GM12878 (cell line): ENCODE measurements at regions of chr3 and their contacts with region 1.

Region 1: GRCh38 chr3:117526470-117527079 is 817.0 kb downstream of the TUSC7 start:
- DNase-seq: no peak
- ATAC-seq: peak; percentile 64
- H3K4me3 ChIP-seq: no peak overlapping the region
- H3K27ac ChIP-seq: no peak overlapping the region
- H3K4me1 ChIP-seq: no peaks in the 10 kb centered on the region
- H3K27me3 ChIP-seq: no peaks in the 10 kb centered on the region
- CTCF ChIP-seq: peak; percentile 56 to 61 (median 59)
- EP300 ChIP-seq: no peak
- POLR2A ChIP-seq: no peak
- RAD21 ChIP-seq: peak; percentile 84

Region 2: GRCh38 chr3:117019082-117019713 is 507.4 kb before region 1 on chr3:
- CTCF ChIA-PET with region 1: interaction called, 27 read pairs
- POLR2A ChIA-PET with region 1: no interaction called
- RAD21 ChIA-PET with region 1: interaction called, 14 read pairs
- SMC1A ChIA-PET with region 1: interaction called, 19 read pairs
- in situ Hi-C with region 1: loop called (anchors 10 kb)
- intact Hi-C with region 1: loop called (anchors 2 kb)
- DNase-seq: no peak
- ATAC-seq: peak; percentile 94
- H3K4me3 ChIP-seq: no peak overlapping the region
- H3K27ac ChIP-seq: no peak overlapping the region
- H3K4me1 ChIP-seq: peaks cover 7% of the 10 kb centered on the region
- H3K27me3 ChIP-seq: no peaks in the 10 kb centered on the region
- CTCF ChIP-seq: peak; percentile 77 to 81 (median 79)
- EP300 ChIP-seq: no peak
- POLR2A ChIP-seq: no peak
- RAD21 ChIP-seq: peak; percentile 82

Region 3: DNA sequence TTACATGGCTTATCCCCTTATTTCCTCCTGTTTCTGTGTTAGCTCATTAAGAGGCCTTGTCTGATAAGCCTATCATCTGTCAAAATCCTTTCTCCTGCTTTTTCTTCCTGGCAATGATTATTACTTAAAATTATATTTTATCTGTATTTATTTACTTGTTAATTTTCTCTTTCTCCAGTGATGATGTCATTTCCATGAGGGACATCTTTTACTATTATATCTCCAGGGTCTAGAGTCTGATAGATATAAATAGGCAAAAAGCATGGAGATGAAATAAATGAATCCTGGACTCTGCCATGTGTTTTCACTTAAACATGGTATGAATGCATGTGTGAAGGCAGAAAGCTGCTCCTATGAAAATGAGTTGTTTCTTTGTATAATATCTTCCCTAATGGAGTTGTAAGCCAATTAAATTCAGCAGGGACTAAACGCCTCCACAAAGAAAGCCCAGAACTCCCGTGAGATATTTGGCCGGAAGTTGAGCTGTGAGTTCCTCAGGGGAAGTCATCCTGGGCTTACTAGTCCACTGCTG is 441.8 kb before region 1 on chr3:
- CTCF ChIA-PET with region 1: no interaction called
- POLR2A ChIA-PET with region 1: no interaction called
- RAD21 ChIA-PET with region 1: no interaction called
- SMC1A ChIA-PET with region 1: no interaction called
- in situ Hi-C with region 1: no loop called
- intact Hi-C with region 1: no loop called
- DNase-seq: no peak
- ATAC-seq: no peak
- H3K4me3 ChIP-seq: no peak overlapping the region
- H3K27ac ChIP-seq: no peak overlapping the region
- H3K4me1 ChIP-seq: no peaks in the 10 kb centered on the region
- H3K27me3 ChIP-seq: no peaks in the 10 kb centered on the region
- CTCF ChIP-seq: no peak
- EP300 ChIP-seq: no peak
- POLR2A ChIP-seq: no peak
- RAD21 ChIP-seq: no peak

Region 4: DNA sequence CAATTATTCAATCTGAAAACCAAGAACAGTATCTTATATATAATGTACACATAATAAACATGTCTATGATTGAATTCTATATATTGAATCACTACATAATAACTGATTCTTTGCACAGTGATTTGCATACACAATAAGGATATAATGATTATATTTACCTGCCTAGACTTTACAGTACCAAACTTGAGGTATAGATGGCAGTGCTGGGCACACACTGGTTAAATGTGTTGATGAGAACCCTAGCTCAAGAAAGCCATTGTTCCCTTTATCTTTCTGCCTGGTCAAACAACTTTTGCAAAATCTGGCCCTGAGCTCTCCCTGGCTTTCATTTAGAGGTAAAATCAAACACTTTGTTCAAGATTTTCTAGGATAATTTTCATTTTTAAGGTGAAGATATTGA is 119.3 kb before region 1 on chr3:
- CTCF ChIA-PET with region 1: interaction called, 177 read pairs
- POLR2A ChIA-PET with region 1: no interaction called
- RAD21 ChIA-PET with region 1: interaction called, 84 read pairs
- SMC1A ChIA-PET with region 1: interaction called, 187 read pairs
- in situ Hi-C with region 1: no loop called
- intact Hi-C with region 1: loop called (anchors 1 kb)
- DNase-seq: no peak
- ATAC-seq: peak; percentile 91
- H3K4me3 ChIP-seq: no peak overlapping the region
- H3K27ac ChIP-seq: no peak overlapping the region
- H3K4me1 ChIP-seq: no peaks in the 10 kb centered on the region
- H3K27me3 ChIP-seq: no peaks in the 10 kb centered on the region; a peak in 1 of 4 replicates
- CTCF ChIP-seq: peak; percentile 27 to 61 (median 42); a peak in 5 of 6 replicates
- EP300 ChIP-seq: no peak
- POLR2A ChIP-seq: no peak
- RAD21 ChIP-seq: peak; percentile 40; the same call in 1 of the 2 replicates

Region 5: DNA sequence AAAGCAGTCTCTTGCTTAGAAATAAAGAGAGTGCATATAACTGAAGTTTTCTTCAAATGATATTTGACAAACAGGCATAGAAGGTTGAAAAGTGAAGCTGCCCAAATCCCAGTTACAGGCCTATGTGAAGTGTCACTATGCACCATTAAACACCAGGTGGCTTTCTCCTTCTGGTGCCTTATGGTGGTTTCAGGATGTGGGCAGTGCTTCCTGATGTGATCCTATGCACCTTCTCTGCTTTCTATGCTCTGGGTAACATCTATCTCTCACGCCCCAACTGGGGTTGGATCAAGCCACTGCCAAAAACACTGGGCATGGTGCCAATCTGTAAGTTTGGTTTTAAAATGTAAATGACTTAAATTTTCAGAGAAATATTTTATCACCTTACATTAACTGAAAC is 72.3 kb before region 1 on chr3:
- CTCF ChIA-PET with region 1: interaction called, 9 read pairs
- POLR2A ChIA-PET with region 1: no interaction called
- RAD21 ChIA-PET with region 1: interaction called, 6 read pairs
- SMC1A ChIA-PET with region 1: interaction called, 26 read pairs
- in situ Hi-C with region 1: no loop called
- intact Hi-C with region 1: no loop called
- DNase-seq: no peak
- ATAC-seq: peak; percentile 59
- H3K4me3 ChIP-seq: no peak overlapping the region
- H3K27ac ChIP-seq: no peak overlapping the region
- H3K4me1 ChIP-seq: no peaks in the 10 kb centered on the region
- H3K27me3 ChIP-seq: peaks cover 0 to 2% of the 10 kb centered on the region in 2 experiments; a peak in 1 of 4 replicates
- CTCF ChIP-seq: no peak; a peak in 1 of 6 replicates
- EP300 ChIP-seq: no peak
- POLR2A ChIP-seq: no peak
- RAD21 ChIP-seq: no peak

Region 6: GRCh38 chr3:117479095-117479494 is 47.5 kb before region 1 on chr3:
- CTCF ChIA-PET with region 1: interaction called, 16 read pairs
- POLR2A ChIA-PET with region 1: no interaction called
- RAD21 ChIA-PET with region 1: interaction called, 34 read pairs
- SMC1A ChIA-PET with region 1: interaction called, 49 read pairs
- in situ Hi-C with region 1: no loop called
- intact Hi-C with region 1: no loop called
- DNase-seq: peak; percentile 48
- ATAC-seq: peak; percentile 95
- H3K4me3 ChIP-seq: no peak overlapping the region
- H3K27ac ChIP-seq: no peak overlapping the region
- H3K4me1 ChIP-seq: no peaks in the 10 kb centered on the region
- H3K27me3 ChIP-seq: no peaks in the 10 kb centered on the region
- CTCF ChIP-seq: no peak
- EP300 ChIP-seq: peak; percentile 91 to 93
- POLR2A ChIP-seq: no peak
- RAD21 ChIP-seq: no peak

Region 7: GRCh38 chr3:117510396-117510795 is 16.2 kb before region 1 on chr3:
- CTCF ChIA-PET with region 1: interaction called, 20 read pairs
- POLR2A ChIA-PET with region 1: no interaction called
- RAD21 ChIA-PET with region 1: interaction called, 3 read pairs
- SMC1A ChIA-PET with region 1: interaction called, 46 read pairs
- in situ Hi-C with region 1: no loop called
- intact Hi-C with region 1: no loop called
- DNase-seq: no peak
- ATAC-seq: no peak
- H3K4me3 ChIP-seq: no peak overlapping the region
- H3K27ac ChIP-seq: no peak overlapping the region
- H3K4me1 ChIP-seq: no peaks in the 10 kb centered on the region
- H3K27me3 ChIP-seq: no peaks in the 10 kb centered on the region
- CTCF ChIP-seq: no peak
- EP300 ChIP-seq: no peak
- POLR2A ChIP-seq: no peak
- RAD21 ChIP-seq: no peak

Region 8: DNA sequence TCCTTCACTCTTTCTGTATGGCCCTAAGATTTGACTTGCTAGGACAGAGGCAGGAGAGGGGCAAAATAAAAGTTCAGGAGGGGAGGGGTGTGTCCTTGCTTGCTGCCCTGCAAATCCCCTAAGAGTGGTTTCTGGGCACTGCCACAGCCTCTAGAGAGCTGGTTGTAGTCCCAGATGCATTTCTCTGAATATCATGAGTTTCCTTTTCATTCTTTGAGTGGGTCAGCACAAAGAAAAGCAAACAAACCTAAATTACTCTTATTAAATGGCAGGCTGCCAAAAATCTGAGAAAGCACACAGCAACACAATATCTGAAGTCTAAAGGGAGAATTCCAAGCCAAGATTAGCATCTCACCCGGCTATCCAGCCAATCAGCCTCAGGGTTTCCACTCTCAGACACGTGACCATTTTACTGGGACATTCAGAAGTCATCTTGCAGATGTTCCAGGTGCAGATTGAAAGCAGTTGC is 102.3 kb after region 1 on chr3:
- CTCF ChIA-PET with region 1: no interaction called
- POLR2A ChIA-PET with region 1: no interaction called
- RAD21 ChIA-PET with region 1: no interaction called
- SMC1A ChIA-PET with region 1: no interaction called
- in situ Hi-C with region 1: no loop called
- intact Hi-C with region 1: no loop called
- DNase-seq: no peak
- ATAC-seq: no peak
- H3K4me3 ChIP-seq: no peak overlapping the region
- H3K27ac ChIP-seq: no peak overlapping the region
- H3K4me1 ChIP-seq: no peaks in the 10 kb centered on the region
- H3K27me3 ChIP-seq: no peaks in the 10 kb centered on the region; a peak in 1 of 4 replicates
- CTCF ChIP-seq: no peak
- EP300 ChIP-seq: no peak
- POLR2A ChIP-seq: no peak
- RAD21 ChIP-seq: no peak

Region 9: GRCh38 chr3:117903226-117903625 is 376.7 kb after region 1 on chr3:
- CTCF ChIA-PET with region 1: no interaction called
- POLR2A ChIA-PET with region 1: no interaction called
- RAD21 ChIA-PET with region 1: no interaction called
- SMC1A ChIA-PET with region 1: no interaction called
- in situ Hi-C with region 1: no loop called
- intact Hi-C with region 1: no loop called
- DNase-seq: no peak
- ATAC-seq: no peak
- H3K4me3 ChIP-seq: no peak overlapping the region
- H3K27ac ChIP-seq: no peak overlapping the region
- H3K4me1 ChIP-seq: no peaks in the 10 kb centered on the region
- H3K27me3 ChIP-seq: no peaks in the 10 kb centered on the region
- CTCF ChIP-seq: no peak
- EP300 ChIP-seq: no peak
- POLR2A ChIP-seq: no peak
- RAD21 ChIP-seq: no peak